CD4-positive, alpha-beta T cell (primary cell): ENCODE measurements at regions of chr5 and their contacts with region 1.

Region 1: DNA sequence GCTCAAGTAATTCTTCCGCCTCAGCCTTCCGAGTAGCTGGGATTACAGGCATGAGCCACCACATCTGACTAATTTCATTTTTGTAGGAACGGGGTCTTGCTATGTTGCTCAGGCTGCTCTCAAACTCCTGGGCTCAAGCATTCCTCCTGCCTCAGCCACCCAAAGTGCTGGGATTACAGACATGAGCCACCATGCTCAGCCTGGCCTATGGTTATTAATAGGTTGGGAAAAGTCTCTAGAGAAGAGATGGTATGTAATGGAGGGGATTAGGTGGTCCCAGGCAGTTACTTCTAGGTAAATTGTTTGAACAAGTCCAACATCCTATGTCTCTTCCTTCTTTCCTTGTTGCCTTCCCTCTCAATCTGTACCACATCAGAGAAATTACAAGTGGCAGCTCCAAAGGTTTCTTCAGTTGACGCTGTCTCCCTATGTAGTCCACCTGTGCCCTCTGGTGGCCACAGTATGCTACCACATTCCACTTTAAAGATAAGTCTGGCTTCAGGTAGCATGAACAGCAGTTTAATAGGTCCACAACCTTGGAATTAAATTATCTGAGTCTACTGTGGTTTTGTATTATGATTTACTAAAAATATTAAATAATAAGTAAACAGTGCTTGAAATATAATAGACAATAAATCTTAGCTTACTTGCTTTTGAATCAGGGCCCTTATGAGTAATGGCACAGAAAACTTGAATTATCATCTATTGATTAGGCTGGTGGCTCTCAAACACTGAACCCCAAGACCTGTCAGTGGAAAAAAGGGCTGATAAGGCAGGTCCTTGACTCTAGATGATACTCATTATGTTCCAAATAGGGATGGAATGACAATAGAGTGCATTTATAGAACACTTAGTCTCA is 9.7 kb downstream of the TIGD6 start:
- DNase-seq: peak; percentile 46 to 83 (median 57)
- ATAC-seq: peak; percentile 94
- H3K4me3 ChIP-seq: no peak overlapping the region
- H3K4me3 Mint-ChIP-seq: no peak overlapping the region
- H3K27ac ChIP-seq: no peak overlapping the region
- H3K27ac Mint-ChIP-seq: no peak overlapping the region
- H3K4me1 ChIP-seq: no peaks in the 10 kb centered on the region
- H3K4me1 Mint-ChIP-seq: no peaks in the 10 kb centered on the region
- H3K27me3 ChIP-seq: no peaks in the 10 kb centered on the region
- H3K27me3 Mint-ChIP-seq: no peaks in the 10 kb centered on the region
- CTCF ChIP-seq: peak; percentile 97

Region 2: DNA sequence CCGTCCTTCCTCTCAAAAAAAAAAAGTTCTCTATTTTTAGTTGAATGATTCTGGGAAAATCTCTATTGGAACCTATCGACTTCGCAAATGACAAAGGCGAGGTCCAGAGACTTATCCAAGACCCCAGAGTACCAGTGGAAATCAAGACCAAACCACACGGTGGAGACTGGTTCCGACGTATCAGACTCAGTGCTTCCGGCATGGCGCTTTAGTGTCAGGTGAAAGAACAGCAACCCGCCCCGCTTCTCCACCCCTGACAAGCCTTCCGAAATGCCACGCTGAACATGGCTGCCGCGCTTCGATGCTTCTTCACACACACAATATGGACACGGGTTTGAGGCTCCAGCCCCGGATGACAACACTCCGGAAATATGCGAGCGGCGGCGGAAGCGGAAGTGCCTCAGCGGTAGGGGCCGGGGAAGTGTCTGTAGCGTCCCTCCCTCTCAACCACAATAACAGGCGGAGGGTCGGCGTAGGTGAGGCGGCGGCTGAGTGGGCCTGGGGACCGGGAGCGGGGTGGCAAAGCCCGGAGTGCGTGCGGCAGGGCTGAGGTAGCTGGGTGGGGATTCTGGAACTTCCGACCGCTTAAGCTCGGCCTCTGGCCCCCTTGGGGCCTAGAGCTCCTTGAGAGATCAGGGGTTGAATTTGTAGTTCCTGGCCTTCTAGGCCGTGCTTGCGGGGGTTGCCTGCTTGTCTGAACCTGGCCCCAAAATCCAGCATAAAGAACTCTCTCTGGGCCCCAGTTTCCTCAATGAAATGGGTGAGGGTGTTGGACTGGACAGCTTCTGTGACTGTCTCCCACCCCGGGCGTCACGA is 1607.0 kb before region 1 on chr5 and contains the start of gene FBXO38:
- CTCF ChIA-PET with region 1: no interaction called
- POLR2A ChIA-PET with region 1: no interaction called
- intact Hi-C with region 1: loop called in 1 of 2 experiments (anchors 10 kb)
- DNase-seq: peak; percentile 93 to 99 (median 97)
- ATAC-seq: peak; percentile 94
- H3K4me3 ChIP-seq: peak within 1 kb of the TSS; percentile 84
- H3K4me3 Mint-ChIP-seq: peak within 1 kb of the TSS; percentile 89
- H3K27ac ChIP-seq: peak within 1 kb of the TSS; percentile 92 to 96
- H3K27ac Mint-ChIP-seq: peak within 1 kb of the TSS; percentile 96
- H3K4me1 ChIP-seq: peaks cover 25% of the 10 kb centered on the region
- H3K4me1 Mint-ChIP-seq: peaks cover 71% of the 10 kb centered on the region
- H3K27me3 ChIP-seq: no peaks in the 10 kb centered on the region
- H3K27me3 Mint-ChIP-seq: no peaks in the 10 kb centered on the region
- CTCF ChIP-seq: no peak
- total RNA-seq, gene FBXO38: 45.7 to 47.3 TPM

Region 3: DNA sequence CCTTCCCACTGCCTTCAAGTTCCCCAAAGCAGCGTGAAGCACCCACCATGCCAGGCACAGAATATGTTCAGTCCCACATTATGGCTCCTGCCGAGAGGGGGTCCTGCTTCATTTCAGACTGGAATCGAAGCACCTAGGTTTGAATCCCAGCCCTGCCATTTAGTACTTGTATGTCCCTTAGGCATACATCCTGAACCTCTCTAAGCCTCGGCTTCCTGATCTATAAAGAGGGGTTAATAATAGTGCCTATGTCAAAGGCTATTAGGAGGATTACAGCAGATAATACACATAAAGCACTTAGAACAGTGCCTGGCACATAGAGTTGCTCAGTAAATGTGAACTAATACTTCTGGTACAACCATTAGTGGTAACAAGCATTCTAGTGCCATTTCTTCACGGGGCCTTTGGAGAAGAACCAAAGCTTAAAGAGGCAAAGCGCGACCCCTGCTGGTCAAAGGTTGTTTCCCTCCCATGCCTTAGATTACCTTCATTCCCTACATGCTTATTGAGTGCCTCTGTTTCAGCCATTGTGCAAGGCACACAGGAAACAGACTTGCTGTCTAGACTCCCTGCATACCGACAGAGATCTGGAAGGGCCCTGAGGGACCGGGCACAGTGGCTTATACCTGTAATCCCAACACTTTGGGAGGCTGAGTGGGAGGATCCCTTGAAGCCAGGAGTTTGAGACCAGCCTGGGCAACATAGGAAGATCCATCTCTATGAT is 162.4 kb before region 1 on chr5:
- CTCF ChIA-PET with region 1: interaction called, 24 read pairs
- POLR2A ChIA-PET with region 1: no interaction called
- intact Hi-C with region 1: no loop called
- DNase-seq: peak; percentile 64 to 89 (median 78)
- ATAC-seq: peak; percentile 78
- H3K4me3 ChIP-seq: no peak overlapping the region
- H3K4me3 Mint-ChIP-seq: no peak overlapping the region
- H3K27ac ChIP-seq: no peak overlapping the region
- H3K27ac Mint-ChIP-seq: no peak overlapping the region
- H3K4me1 ChIP-seq: peaks cover 5% of the 10 kb centered on the region
- H3K4me1 Mint-ChIP-seq: no peaks in the 10 kb centered on the region
- H3K27me3 ChIP-seq: no peaks in the 10 kb centered on the region
- H3K27me3 Mint-ChIP-seq: no peaks in the 10 kb centered on the region
- CTCF ChIP-seq: peak; percentile 85

Region 4: GRCh38 chr5:149852641-149853330 is 138.0 kb before region 1 on chr5:
- CTCF ChIA-PET with region 1: interaction called, 6 read pairs
- POLR2A ChIA-PET with region 1: no interaction called
- intact Hi-C with region 1: loop called in 1 of 2 experiments (anchors 5 kb)
- DNase-seq: peak in 12 of 14 experiments; percentile 8 to 59 (median 24)
- ATAC-seq: no peak
- H3K4me3 ChIP-seq: no peak overlapping the region
- H3K4me3 Mint-ChIP-seq: no peak overlapping the region
- H3K27ac ChIP-seq: no peak overlapping the region
- H3K27ac Mint-ChIP-seq: no peak overlapping the region
- H3K4me1 ChIP-seq: no peaks in the 10 kb centered on the region
- H3K4me1 Mint-ChIP-seq: no peaks in the 10 kb centered on the region
- H3K27me3 ChIP-seq: no peaks in the 10 kb centered on the region
- H3K27me3 Mint-ChIP-seq: no peaks in the 10 kb centered on the region
- CTCF ChIP-seq: peak; percentile 71

Region 5: GRCh38 chr5:149966946-149967345 is 23.8 kb before region 1 on chr5:
- CTCF ChIA-PET with region 1: interaction called, 11 read pairs
- POLR2A ChIA-PET with region 1: no interaction called
- intact Hi-C with region 1: no loop called
- DNase-seq: no peak
- ATAC-seq: no peak
- H3K4me3 ChIP-seq: no peak overlapping the region
- H3K4me3 Mint-ChIP-seq: no peak overlapping the region
- H3K27ac ChIP-seq: no peak overlapping the region
- H3K27ac Mint-ChIP-seq: no peak overlapping the region
- H3K4me1 ChIP-seq: peaks cover 5% of the 10 kb centered on the region
- H3K4me1 Mint-ChIP-seq: peaks cover 18% of the 10 kb centered on the region
- H3K27me3 ChIP-seq: no peaks in the 10 kb centered on the region
- H3K27me3 Mint-ChIP-seq: no peaks in the 10 kb centered on the region
- CTCF ChIP-seq: no peak